ENCODE measurements at regions of chr1 and their contacts with region 1.

Region 1: GRCh38 chr1:220776720-220777326 is 9.9 kb upstream of the MTARC1 start:
- DNase-seq: peak; percentile 68
- H3K4me3 ChIP-seq: no peak overlapping the region
- H3K27ac ChIP-seq: no peak overlapping the region
- H3K4me1 ChIP-seq: no peaks in the 10 kb centered on the region
- H3K27me3 ChIP-seq: no peaks in the 10 kb centered on the region
- CTCF ChIP-seq: peak; percentile 91 to 94
- POLR2A ChIP-seq: no peak

Region 2: GRCh38 chr1:220217383-220217988 is 559.3 kb before region 1 on chr1:
- CTCF ChIA-PET with region 1: interaction called, 27 read pairs
- POLR2A ChIA-PET with region 1: no interaction called
- dilution Hi-C with region 1: no loop called
- intact Hi-C with region 1: loop called (anchors 1 kb)
- DNase-seq: peak; percentile 29
- H3K4me3 ChIP-seq: no peak overlapping the region
- H3K27ac ChIP-seq: no peak overlapping the region
- H3K4me1 ChIP-seq: no peaks in the 10 kb centered on the region
- H3K27me3 ChIP-seq: no peaks in the 10 kb centered on the region
- CTCF ChIP-seq: peak; percentile 13 to 26
- POLR2A ChIP-seq: no peak

Region 3: GRCh38 chr1:220294846-220295301 is 481.9 kb before region 1 on chr1:
- CTCF ChIA-PET with region 1: interaction called, 64 read pairs
- POLR2A ChIA-PET with region 1: no interaction called
- dilution Hi-C with region 1: no loop called
- intact Hi-C with region 1: loop called (anchors 1 kb)
- DNase-seq: no peak
- H3K4me3 ChIP-seq: no peak overlapping the region
- H3K27ac ChIP-seq: no peak overlapping the region
- H3K4me1 ChIP-seq: peaks cover under 1% of the 10 kb centered on the region
- H3K27me3 ChIP-seq: peaks cover 10 to 16% of the 10 kb centered on the region in 2 experiments
- CTCF ChIP-seq: no peak
- POLR2A ChIP-seq: no peak

Region 4: GRCh38 chr1:220498188-220498587 is 278.6 kb before region 1 on chr1:
- CTCF ChIA-PET with region 1: no interaction called
- POLR2A ChIA-PET with region 1: no interaction called
- dilution Hi-C with region 1: no loop called
- intact Hi-C with region 1: no loop called
- DNase-seq: no peak
- H3K4me3 ChIP-seq: no peak overlapping the region
- H3K27ac ChIP-seq: no peak overlapping the region
- H3K4me1 ChIP-seq: no peaks in the 10 kb centered on the region
- H3K27me3 ChIP-seq: no peaks in the 10 kb centered on the region
- CTCF ChIP-seq: no peak
- POLR2A ChIP-seq: no peak

Region 5: DNA sequence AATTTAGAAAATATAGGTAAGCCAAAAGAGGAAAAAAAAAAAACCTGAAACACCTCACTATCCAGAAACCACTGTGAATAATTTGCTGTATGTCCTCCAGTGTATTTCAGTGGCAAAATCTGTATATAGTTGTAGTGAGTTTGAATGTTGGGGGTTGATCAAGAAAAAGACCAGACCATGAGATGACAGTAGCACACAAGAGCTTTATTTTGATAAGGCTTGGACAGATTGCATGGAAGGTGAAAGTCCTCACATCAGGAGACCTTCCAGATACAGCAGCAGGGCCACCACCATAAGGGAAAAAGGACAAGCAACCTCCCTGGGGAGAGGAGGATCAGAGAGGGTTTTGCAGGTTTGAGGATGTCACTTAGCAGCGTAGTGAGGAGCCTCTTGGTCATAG is 102.9 kb before region 1 on chr1:
- CTCF ChIA-PET with region 1: interaction called, 19 read pairs
- POLR2A ChIA-PET with region 1: no interaction called
- dilution Hi-C with region 1: no loop called
- intact Hi-C with region 1: no loop called
- DNase-seq: no peak
- H3K4me3 ChIP-seq: no peak overlapping the region
- H3K27ac ChIP-seq: no peak overlapping the region
- H3K4me1 ChIP-seq: no peaks in the 10 kb centered on the region
- H3K27me3 ChIP-seq: no peaks in the 10 kb centered on the region
- CTCF ChIP-seq: no peak
- POLR2A ChIP-seq: no peak

Region 6: DNA sequence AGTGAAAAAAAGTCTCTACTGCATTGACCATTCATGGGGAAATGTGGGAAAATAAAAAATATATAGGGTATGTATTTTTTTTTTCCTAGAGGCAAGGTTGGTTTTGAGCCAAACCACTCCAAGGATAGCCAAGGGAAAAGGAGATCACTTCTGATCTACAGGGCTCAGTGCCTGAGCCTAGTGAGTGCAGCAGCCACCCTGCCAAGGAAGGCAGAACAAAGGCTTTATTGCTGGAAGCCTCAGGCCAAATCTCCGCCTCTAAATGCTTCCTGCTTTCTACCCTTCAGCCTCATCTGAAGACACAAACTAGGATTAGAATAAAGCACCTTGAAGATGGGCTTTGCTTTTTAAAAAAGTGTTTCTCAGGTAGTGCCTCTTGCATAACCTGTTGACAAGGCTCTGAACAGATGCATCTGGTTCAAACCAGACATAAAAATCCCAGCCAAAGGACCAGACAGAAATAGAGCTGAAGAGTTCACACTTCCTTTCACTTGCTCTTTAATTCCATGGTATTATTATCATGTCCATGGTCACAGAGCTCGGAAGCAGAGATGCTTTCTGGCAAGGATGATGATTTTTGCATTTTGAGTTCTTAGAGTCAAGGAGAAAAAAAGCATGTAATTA is 76.2 kb before region 1 on chr1:
- CTCF ChIA-PET with region 1: interaction called, 17 read pairs
- POLR2A ChIA-PET with region 1: no interaction called
- dilution Hi-C with region 1: no loop called
- intact Hi-C with region 1: no loop called
- DNase-seq: peak; percentile 38
- H3K4me3 ChIP-seq: no peak overlapping the region
- H3K27ac ChIP-seq: no peak overlapping the region
- H3K4me1 ChIP-seq: no peaks in the 10 kb centered on the region
- H3K27me3 ChIP-seq: no peaks in the 10 kb centered on the region
- CTCF ChIP-seq: no peak
- POLR2A ChIP-seq: no peak

Region 7: GRCh38 chr1:220761688-220762427 is 15.0 kb before region 1 on chr1:
- CTCF ChIA-PET with region 1: interaction called, 21 read pairs
- POLR2A ChIA-PET with region 1: no interaction called
- dilution Hi-C with region 1: no loop called
- intact Hi-C with region 1: no loop called
- DNase-seq: no peak
- H3K4me3 ChIP-seq: no peak overlapping the region
- H3K27ac ChIP-seq: no peak overlapping the region
- H3K4me1 ChIP-seq: no peaks in the 10 kb centered on the region
- H3K27me3 ChIP-seq: no peaks in the 10 kb centered on the region
- CTCF ChIP-seq: no peak
- POLR2A ChIP-seq: no peak

Measured in endothelial cell of umbilical vein (primary cell).